Heart right ventricle (tissue), 16 donors: ENCODE measurements at regions of chr9 and their contacts with region 1.

Region 1: DNA sequence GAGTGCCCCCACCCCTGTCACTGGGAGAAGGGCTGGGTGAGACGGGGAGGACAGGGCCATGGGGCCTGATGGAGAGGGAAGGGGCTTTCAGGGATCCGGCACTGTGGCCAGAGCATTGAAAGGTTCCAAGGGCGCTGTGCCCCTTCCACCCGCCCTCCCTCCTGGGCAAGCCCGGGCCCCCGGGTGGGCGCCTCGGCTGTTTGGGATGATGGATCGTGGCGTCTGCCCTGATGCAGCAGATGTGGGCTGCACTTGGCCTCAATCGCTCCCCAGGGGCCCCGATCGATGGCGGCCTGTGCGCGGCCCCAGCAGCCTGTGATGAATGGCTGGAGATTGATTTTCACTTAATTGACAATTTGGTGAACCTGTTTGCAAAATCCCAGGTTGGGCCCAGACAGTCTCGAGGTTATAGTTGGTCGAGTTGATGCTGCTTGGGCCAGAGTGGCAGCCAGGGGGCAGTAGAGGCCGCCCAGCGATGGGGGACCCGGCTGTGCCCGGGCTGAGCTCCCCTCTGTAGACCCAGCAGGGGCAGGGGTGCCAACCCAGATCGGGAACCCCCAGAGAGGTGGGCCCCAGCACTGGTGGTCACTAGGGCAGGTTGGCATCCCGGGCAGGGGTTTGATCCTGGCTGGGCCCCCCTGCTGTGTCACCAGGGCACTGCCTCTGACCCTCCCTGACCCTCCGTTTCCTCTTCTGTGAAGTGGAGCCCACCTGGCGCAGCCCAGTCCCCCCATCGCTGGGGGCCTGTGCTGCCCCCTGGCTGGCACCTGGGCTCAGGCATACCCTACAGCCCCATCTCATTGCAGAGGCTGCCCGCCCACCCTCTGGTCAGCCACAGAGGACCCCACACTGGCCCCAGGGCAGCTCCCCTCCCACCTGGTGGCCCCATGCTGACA is 34.7 kb downstream of the LHX3 start:
- DNase-seq: peak in 1 of 2 donors; percentile 34
- ATAC-seq: peak in 7 of 8 donors; percentile 25 to 79 (median 71)
- H3K4me3 ChIP-seq: no peak overlapping the region
- H3K27ac ChIP-seq: no peak overlapping the region
- H3K4me1 ChIP-seq: no peaks in the 10 kb centered on the region
- H3K27me3 ChIP-seq: peaks cover 0 to 44% (median 29%) of the 10 kb centered on the region in 7 donors
- CTCF ChIP-seq: peak; percentile 50 to 80 (median 68)

Region 2: DNA sequence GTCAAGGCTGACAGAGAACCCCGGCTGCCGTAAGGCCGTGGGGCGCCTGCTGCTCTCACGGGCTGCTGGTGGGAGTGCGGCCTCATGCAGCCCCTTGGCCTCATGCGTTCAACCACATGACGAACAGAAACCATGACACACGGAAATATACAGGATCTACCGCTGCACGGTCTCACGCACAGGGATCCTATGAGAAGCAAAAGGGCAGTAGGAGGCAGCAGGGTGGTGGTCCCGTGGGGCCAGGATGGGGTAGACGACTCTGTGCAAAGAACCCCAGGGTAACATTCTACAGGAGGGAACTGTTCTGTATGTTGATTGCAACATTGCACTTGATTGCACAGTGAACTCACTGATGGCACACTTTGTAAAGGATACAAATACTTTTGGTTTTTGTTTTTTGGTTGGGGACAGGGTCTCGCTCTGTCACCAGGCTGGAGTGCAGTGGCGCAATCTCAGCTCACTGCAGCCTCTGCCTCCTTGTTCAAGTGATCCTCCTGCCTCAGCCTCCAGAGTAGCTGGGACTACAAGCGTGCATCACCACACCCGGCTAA is 126.7 kb before region 1 on chr9:
- intact Hi-C with region 1: no loop called
- DNase-seq: no peak
- ATAC-seq: no peak
- H3K4me3 ChIP-seq: no peak overlapping the region
- H3K27ac ChIP-seq: no peak overlapping the region
- H3K4me1 ChIP-seq: peaks cover 0 to 52% (median 18%) of the 10 kb centered on the region in 9 donors
- H3K27me3 ChIP-seq: no peaks in the 10 kb centered on the region
- CTCF ChIP-seq: no peak

Region 3: DNA sequence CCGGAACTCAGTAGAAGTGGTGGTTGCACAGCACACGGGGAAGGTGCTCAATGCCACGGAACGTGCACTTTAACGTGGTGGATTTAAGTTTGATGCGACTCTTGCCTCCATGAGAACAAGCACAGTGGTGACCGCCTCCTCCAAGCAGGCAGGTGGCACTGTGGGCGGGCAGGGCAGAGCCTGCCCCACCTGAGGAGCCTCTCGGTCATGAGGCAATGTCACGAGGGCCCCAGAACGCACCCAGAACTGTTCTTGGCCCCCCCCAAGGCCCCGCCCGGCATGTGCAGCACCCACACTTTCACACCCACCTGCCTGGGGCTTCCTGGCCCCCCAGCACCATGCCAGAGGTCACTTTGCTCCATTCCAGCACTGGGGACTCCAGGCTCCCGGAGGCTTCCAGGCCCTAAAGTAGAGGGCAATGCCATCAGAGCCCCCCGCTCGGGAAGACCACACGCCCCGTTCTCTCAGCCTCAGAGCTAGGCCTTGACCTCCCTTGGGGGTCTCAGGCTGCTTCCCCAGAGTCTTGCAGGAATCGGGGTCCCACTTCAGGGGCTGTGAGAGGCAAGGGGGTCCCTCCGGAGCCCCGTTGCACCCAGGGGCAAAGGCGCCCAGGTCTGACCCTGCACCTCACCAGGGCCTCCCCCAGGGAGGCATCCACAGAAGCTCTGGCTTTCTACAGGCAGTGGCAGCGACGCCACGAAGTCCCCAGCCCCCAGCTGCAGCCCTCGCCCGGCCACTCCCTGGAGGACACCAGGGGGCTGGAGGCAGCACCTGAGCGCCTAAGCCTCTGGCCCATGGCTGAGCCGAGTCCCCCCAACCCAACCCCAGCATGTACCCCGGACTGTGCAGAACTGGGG is 119.6 kb after region 1 on chr9:
- intact Hi-C with region 1: loop called in 2 of 10 experiments (anchors 5 to 10 kb)
- DNase-seq: peak in 1 of 2 donors; percentile 2
- ATAC-seq: no peak
- H3K4me3 ChIP-seq: no peak overlapping the region
- H3K27ac ChIP-seq: no peak overlapping the region
- H3K4me1 ChIP-seq: no peaks in the 10 kb centered on the region
- H3K27me3 ChIP-seq: peaks cover 0 to 47% (median 23%) of the 10 kb centered on the region in 7 donors
- CTCF ChIP-seq: no peak

Region 4: GRCh38 chr9:136300016-136300545 is 129.8 kb after region 1 on chr9:
- intact Hi-C with region 1: no loop called
- DNase-seq: no peak
- ATAC-seq: no peak
- H3K4me3 ChIP-seq: no peak overlapping the region
- H3K27ac ChIP-seq: no peak overlapping the region
- H3K4me1 ChIP-seq: peaks cover 0 to 4% (median 0%) of the 10 kb centered on the region in 9 donors
- H3K27me3 ChIP-seq: peaks cover 0 to 24% (median 3%) of the 10 kb centered on the region in 7 donors
- CTCF ChIP-seq: no peak